Mammary epithelial cell (primary cell): ENCODE measurements at regions of chr3 and their contacts with region 1.

Region 1: DNA sequence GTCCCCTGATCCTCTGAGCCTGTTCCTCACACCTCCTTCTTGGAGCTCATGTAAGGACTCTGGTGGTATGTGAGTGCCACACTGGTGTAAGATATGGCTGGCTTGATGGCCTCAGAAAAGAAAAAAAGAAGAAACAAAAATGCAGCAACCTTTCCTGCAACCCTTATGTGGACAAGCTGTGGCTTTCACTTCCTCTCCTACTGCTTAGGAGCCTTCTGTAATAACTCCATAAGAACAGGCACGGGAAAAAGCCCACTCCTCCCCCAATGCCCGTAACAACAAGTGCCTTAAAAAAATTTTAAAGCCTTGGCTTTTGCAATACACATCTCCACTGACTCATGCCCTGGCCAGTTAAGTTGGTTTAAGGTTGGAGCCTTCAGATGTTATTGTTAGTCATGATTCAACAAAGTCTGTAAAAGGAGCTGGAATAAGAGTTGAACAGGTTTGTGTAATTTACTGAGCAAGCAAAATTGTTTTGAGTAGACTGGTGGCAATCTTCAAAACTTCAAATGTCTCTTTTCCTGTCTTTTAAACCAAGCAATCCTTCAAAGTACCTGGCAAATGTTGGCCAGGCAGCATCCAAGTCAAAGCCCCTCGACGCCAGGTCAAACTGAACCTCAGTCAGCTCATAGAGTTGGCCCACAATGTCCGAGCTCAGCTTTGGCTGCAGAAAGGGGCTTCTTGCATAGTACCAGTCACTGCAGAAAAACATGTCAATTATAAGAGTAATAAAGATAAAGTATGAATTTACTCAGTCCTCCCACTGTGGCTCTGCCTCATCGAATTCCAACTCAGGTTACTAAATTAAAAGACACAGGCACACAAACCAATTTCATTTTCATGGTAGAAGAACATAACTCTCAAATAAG is 22.9 kb downstream of the FYCO1 start:
- DNase-seq: peak; percentile 86
- H3K4me3 ChIP-seq: no peak overlapping the region
- H3K27ac ChIP-seq: no peak overlapping the region
- H3K4me1 ChIP-seq: peaks cover 19% of the 10 kb centered on the region
- H3K27me3 ChIP-seq: no peaks in the 10 kb centered on the region
- CTCF ChIP-seq: no peak

Region 2: DNA sequence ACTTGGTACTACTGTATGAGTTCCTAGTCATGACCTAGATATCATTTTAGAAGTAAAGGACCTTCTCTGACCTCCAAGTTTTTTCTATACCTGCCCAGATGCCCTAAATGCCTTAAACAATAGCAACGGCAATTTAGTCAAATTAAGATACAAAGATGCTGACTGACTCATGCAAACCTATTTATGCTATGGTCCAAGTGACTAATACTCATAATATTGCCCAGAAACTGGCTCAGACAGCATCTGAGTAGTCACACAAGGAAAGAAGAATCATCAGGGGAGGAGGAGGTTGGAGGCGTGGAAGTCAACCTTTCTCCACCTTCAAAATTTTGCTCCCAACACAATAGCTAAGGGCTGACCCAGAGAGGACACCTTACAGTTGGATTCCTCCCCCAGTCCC is 16.0 kb after region 1 on chr3:
- CTCF ChIA-PET with region 1: no interaction called
- dilution Hi-C with region 1: no loop called
- in situ Hi-C with region 1: no loop called
- intact Hi-C with region 1: loop called (anchors 1 kb)
- DNase-seq: peak; percentile 90
- H3K4me3 ChIP-seq: no peak overlapping the region
- H3K27ac ChIP-seq: peak overlapping the region; percentile 74
- H3K4me1 ChIP-seq: peaks cover 40% of the 10 kb centered on the region
- H3K27me3 ChIP-seq: no peaks in the 10 kb centered on the region
- CTCF ChIP-seq: no peak